Posterior vena cava (tissue), 2 donors: ENCODE measurements at regions of chr2 and their contacts with region 1.

Region 1: DNA sequence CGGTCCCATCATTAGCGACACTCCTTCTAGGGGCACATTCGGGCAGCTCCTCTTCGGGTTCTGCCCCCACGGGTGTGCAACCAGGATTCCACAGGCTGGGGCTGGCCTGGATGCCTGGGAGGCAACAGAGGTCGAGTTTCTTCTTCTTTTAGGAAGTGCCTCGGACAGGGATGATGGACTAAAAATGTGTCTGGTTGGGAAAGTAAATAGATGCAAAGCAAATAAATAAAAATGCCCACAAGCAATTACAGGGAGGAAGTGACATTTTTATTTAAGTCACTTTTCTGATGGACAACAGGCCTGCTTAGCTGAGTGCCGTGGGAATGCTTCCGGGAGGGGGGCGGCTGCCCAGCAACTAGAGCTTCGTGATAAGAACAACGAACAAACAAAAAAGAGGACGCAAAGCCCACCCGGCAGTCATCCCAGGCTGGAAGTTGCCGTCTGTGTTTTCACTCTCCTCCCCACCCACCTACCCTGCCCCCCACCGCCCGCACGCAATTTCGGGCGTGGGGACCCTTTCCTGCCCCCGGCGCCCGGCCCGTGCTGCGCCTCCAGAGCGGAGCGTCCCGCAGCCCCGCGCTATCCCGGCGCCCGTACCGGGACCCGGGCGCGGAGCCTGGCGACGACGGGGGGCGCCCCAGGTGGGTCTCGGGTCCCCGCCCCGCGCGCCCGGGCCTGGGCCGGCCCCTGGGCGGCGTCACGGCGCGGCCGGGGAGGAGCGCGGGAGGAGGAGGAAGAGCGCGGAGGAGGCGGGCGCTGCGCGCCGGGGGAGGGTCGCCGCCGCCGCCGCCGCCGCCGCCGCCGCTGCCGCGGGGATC is 412 bp upstream of the NCK2 start:
- DNase-seq: peak; percentile 84

Region 2: GRCh38 chr2:105804266-105804665 is 60.0 kb after region 1 on chr2:
- intact Hi-C with region 1: loop called in 1 of 2 experiments (anchors 2 kb)
- DNase-seq: no peak